ENCODE measurements at regions of chr14 and their contacts with region 1.

Region 1: DNA sequence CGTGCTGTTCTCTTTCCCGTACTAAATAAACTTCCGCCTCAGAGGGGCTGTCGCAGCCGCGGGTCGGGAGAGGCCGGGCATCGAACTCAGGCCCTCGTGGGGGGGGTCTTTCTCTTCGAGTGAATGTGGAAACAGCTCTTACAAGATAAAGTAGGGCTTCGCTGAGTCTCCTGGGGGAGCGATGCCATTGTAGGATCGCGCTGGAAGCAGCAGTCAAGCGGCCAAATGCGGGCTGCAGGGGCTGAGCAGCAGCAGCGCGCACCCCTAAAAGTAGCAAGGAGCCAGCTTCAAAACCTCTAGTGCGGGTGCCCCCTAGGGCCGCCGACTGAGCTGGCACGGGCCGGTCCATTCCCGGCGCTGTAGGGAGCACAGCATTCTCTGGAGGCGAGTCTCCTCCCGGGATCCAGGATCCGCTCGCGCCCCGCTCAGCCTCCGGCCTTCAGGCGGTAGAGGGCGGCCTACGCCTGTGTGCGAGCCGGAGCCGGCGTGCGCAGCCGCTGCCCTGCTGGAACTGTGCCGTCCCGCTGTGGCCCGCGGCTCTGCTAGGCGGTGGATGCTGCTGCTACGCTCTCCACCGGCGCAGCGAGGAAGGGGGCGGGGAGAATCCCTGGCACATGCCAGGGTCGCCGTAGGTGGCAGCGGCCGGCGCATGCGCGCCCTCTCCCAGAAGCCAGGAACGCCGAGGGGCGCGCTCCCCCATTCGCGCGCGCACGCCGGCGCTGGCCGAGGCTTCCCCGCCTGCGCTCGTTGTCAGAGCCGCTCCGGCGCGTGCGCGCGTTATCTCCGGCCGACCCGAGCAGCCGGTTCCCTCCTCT is at the start of gene FUT8:
- DNase-seq: peak; percentile 72
- H3K4me3 ChIP-seq: peak within 1 kb of the TSS; percentile 84
- CTCF ChIP-seq: peak; percentile 81

Region 2: DNA sequence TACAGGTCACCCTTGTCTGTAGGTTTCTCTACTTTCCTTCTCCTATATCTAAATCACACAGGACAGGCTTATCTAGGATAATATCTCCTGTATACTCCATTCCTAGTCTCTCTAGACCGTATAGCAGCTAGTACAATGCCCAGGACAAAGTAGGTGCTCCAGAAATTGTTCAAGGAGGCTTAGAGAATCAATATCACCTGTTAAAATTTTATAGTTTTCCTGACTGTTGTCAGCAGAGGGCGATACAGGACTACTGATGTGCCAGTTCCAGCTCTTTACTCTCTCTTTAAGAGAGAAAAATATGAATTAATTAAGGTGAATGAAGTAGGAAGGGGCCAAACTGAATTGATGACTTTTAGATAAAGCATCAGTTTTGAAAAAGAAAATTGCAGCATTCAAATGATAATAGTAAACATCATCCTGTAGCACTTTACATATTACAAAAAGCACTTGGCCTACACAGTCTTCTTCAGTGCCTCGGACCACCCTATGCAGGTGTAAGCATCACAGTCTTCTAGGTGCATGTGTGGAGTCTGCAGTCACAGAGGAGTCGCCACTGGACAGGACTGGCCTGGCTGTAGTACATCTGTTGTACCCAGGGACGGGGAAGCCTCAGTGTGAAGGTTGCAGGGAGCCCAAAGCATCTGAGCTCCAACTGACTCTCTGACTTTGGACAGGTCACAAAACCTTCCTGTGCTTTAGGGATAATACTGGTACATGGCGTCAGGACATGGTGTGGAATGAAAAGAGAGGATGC is 248.0 kb before region 1 on chr14:
- CTCF ChIA-PET with region 1: interaction called, 229 read pairs
- POLR2A ChIA-PET with region 1: no interaction called
- DNase-seq: no peak
- H3K4me3 ChIP-seq: no peak overlapping the region
- CTCF ChIP-seq: peak; percentile 22

Region 3: DNA sequence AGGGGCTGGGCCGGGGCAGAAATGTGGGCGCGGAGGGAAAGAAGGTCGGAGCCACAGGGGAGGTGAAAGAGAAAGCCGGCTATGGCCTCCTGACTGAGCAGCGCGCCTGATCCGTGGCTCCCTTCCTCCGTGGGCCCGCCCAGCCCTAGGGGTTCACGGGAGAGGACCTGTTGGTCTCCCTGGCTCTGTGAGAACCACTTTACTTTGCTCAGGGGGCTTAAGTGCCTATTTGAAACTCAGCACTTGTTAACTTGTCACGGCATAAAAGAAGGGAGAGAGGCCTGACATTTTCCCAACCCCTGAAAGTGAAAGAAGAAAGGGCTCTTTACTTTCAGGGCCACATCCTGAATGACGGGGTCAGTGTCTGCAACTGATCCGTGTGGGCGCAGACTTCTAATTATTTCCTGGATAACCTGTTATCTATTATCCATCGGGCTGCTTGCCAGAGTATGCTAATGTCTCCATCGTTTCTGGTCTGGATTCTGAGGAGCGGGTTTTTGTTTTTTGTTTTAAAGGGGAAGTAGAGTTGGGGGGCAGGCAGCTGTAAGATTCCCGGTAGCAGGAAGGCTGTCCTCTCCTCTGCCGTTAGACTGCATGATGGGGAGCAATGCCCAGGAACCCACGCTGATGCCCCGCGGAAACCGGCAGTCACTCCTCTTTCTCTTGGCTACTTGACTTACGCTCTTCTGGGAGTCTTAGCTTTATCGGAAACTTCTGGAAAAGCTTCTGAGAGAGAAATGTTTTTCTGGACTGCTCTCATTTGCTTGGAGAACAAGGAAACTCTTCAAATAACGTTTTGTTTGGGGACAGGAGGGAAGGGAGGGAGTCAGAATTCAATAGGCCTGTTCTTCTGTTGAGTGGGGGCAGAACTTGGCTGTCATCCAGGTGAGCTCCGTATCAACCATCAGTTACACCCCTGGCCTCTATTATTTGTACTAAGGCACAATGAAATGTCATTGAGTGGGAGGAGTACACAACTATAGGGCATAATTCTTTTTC is 182.2 kb before region 1 on chr14:
- CTCF ChIA-PET with region 1: interaction called, 38 read pairs
- POLR2A ChIA-PET with region 1: interaction called, 4 read pairs
- DNase-seq: no peak
- H3K4me3 ChIP-seq: peak overlapping the region; percentile 36
- CTCF ChIP-seq: no peak

Region 4: GRCh38 chr14:65370801-65371248 is 41.4 kb before region 1 on chr14:
- CTCF ChIA-PET with region 1: no interaction called
- POLR2A ChIA-PET with region 1: no interaction called
- DNase-seq: no peak
- H3K4me3 ChIP-seq: no peak overlapping the region
- CTCF ChIP-seq: no peak

Region 5: GRCh38 chr14:65401281-65401680 is 11.0 kb before region 1 on chr14:
- CTCF ChIA-PET with region 1: interaction called, 18 read pairs
- POLR2A ChIA-PET with region 1: no interaction called
- DNase-seq: no peak
- H3K4me3 ChIP-seq: no peak overlapping the region
- CTCF ChIP-seq: no peak

Region 6: DNA sequence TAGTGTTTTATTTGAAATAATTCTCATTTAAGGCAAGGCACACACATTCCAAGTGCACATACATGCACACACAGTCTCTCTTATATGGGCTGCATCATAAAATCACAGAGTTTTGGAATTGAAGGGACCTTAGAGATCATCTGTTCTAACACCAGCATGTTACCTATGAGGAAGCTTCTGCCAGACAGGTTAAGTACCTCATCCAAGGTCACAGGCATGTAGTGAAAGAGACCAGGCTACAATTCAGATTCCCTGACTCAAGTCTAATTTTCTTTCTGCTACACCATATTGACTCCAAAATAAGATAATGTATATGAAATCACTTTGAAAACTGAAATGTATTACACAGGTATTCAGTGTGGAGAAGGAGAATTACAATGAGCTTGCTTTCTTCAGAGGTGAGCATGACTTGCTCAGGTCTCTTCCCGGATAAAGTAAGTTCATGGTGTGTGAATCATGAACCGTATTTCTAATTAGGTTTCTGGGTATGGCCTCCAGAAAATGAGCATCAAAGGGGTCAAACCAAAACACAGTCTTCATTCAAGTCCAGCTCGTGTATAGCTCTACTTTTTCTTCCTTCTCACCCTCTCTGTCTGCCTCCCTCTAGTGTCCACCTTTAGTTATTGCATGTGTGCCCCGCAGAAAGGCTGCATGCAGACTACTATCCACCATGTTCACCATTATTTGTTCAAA is 412.2 kb after region 1 on chr14:
- CTCF ChIA-PET with region 1: interaction called, 183 read pairs
- POLR2A ChIA-PET with region 1: no interaction called
- DNase-seq: peak; percentile 21
- H3K4me3 ChIP-seq: no peak overlapping the region
- CTCF ChIP-seq: peak; percentile 87

Region 7: DNA sequence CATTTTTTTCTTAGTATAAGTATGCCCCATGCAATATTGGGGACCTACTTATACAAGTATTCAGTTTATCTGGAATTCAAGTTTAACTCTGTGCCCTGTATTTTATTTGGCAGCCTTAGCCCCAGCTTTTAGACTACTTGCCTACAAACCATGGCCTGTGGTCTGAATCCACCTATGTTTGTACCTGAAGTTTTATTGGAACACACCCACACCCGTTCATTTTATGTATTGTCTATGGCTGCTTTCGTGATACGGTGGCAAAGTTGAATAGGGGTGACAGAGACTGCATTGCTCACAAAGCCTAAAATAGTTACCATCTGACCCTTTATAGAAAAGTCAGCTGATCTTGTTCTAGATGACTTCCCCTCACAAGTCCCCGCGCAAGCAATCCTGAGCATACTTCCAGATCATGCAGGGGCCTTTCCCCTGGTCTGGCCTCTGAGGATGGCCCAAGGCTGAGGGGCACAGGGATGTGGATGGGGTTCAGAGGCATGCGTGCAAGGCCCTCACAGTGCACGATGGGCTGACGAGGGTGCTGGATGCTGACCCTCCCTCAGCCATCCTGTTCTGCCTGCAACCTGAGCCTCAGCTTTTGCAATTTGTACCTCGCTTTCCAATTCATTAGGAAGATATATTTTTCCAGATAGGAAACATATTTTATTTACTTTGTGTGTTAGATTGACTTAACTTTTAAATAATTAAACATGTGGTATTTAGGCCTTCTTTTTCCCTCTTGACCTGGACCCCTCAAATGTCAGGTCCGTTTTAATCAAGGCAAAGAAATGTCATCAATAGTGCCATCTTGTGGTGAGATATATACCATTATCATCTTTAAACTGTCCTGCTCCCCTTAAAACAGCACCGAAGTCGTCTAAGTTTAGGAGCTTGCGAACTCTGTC is 546.7 kb after region 1 on chr14:
- CTCF ChIA-PET with region 1: interaction called, 138 read pairs
- POLR2A ChIA-PET with region 1: no interaction called
- DNase-seq: no peak
- H3K4me3 ChIP-seq: no peak overlapping the region
- CTCF ChIP-seq: peak; percentile 18